Astrocyte of the cerebellum (primary cell): ENCODE measurements at regions of chr17 and their contacts with region 1.

Region 1: DNA sequence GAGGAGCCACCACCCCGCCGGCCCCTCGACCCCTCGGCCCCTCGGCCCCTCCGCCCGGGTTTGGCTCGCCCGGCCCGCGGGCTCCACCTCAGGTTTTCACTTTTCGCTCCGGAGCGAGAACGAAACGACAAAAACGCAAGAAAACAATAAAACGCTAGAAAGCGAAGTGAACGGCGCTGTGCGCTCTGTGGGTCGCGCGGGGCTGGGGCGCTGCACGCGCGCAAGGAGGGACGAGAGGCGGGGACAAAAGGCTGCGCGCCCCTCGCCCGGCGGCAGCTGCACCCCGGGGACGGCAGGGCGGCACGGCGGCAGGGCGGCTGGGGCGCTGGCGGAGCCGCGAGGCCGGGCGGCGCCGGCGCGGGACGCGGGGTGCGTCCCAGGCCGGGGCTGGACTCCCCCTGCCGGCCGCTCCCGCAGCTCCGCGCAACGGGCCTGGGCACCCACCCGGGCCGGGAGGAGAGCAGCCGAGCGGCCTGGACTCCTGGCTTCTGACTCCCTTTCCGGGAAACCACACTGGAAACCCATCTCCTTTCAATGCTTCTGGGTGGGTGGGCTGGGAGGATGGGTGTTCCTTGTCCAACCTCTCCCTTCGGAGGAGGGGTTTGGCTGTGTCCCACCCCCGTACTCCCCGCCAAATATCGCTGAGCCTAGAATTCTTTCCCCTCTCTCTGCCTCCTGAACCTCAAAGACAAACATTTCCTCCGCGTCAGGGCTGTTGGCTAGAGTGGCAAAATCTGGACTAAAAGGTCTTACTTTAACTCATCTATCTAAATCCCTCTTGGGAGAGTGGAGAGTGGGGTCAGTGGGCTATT is 9.9 kb downstream of the TBX2 start:
- DNase-seq: no peak
- H3K4me3 ChIP-seq: peak overlapping the region; percentile 45
- CTCF ChIP-seq: peak; percentile 45

Region 2: GRCh38 chr17:61002316-61002736 is 407.2 kb before region 1 on chr17:
- in situ Hi-C with region 1: loop called (anchors 10 kb)
- DNase-seq: peak; percentile 44
- H3K4me3 ChIP-seq: no peak overlapping the region
- CTCF ChIP-seq: peak; percentile 30

Region 3: DNA sequence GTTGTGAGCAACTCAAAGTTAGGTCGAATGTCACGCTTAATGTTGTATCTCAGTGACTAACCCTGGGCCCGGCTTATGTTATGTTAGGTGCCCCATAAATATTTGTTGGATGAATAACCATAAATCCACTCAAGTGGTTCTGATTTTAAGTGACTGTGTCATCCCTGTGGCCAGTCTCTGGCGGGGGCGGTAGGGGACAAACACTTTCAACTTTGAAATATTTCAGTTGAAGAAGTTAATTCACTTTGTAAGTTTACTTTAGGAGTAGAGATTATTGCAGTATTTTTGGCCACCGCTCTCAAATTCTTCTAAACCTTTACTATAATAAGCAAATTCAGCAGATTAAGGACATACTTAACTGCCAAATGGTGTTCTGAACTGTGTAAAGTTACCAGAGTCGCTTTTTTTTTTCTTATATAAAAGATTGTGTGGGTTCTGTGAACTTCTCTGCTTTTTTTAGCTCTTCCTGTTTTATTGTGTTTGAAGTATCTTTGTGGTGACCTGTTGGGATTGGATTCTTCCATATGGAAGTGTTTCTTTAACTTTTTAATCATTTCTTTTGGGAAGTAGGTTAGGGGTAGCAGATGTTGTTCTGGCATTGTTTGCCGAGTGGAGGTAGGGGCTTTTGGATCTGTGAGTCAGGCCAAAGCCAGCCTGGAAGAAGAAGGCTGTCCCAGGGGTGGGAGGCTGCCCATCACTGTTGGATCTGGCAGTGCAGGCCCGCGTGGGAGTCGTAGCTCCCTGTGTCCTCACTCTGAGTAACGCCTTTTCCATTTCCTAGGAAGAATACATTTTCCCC is 71.3 kb before region 1 on chr17:
- in situ Hi-C with region 1: no loop called
- DNase-seq: peak; percentile 27
- H3K4me3 ChIP-seq: no peak overlapping the region
- CTCF ChIP-seq: no peak